Calu3 (cell line): ENCODE measurements at regions of chr5 and their contacts with region 1.

Region 1: DNA sequence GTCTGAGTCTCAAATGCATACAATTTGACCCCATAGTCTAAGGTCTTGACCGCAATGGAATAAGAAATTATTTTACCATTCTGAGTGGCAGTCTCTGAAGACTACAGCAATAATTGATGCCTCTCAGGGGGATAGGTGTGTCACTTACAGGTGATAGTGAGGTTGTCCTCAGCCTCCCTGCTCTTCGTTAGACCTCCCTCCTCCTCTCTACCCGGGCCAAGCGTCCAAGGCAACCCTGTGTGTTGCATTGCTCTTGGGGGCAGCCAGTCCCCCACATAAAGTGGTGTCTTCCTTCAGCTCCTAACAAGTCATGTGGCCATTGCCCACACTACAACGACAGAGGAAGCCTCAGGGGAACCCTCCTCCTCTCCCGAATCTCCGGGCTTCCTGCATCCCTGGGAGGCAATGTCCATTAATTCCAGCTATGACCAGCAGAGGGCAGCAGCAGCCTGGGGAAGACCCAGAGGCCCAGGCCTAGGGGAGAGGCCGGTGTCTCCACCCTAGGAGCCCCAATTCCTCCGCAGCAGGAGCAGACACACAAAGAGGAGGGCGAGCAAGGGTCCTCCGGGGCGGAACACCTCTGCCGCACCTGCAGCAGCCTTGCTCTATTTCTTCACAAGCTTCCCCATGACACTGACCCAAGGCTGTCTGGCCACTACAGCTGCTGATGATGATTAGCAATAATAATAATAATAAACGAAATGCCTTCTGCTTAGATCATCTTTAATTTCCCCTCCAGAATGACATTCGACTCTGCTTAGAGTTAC is 134.8 kb downstream of the KCNIP1 start:
- DNase-seq: peak; percentile 90
- H3K4me3 Mint-ChIP-seq: no peak overlapping the region
- H3K27ac Mint-ChIP-seq: no peak overlapping the region
- H3K4me1 Mint-ChIP-seq: peaks cover 19% of the 10 kb centered on the region
- H3K27me3 Mint-ChIP-seq: peaks cover 30% of the 10 kb centered on the region
- CTCF ChIP-seq: peak; percentile 97

Region 2: GRCh38 chr5:170451747-170452365 is 186.8 kb before region 1 on chr5:
- CTCF ChIA-PET with region 1: no interaction called
- intact Hi-C with region 1: no loop called
- DNase-seq: no peak
- H3K4me3 Mint-ChIP-seq: no peak overlapping the region
- H3K27ac Mint-ChIP-seq: no peak overlapping the region
- H3K4me1 Mint-ChIP-seq: no peaks in the 10 kb centered on the region
- H3K27me3 Mint-ChIP-seq: peaks cover 37% of the 10 kb centered on the region
- CTCF ChIP-seq: no peak

Region 3: DNA sequence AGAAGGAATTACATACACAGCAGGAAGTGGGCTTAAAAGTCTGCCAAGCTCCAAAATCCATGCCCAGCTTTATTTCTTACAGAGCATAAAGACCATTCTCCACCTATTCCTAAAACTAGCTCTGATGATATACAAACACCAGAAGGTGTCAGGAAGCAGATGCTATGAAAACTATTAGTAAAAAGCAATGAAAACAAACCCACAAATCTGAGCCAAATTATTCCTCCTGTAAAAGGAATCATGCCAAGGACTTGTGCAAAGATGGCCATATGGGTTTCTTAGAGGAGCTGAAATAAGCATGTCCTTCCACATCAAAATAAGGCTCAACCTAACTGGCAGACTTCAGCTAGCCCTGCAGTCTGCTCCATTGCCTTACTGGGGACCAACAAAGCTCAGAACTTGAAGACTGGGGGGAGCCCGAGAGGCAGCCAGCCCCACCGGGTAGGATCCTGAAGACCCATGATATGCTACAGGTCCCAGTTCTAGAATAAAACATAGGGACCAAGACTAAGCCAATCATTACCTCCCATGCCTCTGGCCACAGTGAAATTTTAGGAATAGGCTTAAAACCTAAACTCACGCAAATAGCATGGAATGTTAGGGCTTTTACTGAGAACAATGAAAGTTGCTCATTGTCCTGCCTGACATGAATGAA is 102.0 kb after region 1 on chr5:
- CTCF ChIA-PET with region 1: interaction called, 11 read pairs
- intact Hi-C with region 1: loop called (anchors 5 kb)
- DNase-seq: no peak
- H3K4me3 Mint-ChIP-seq: no peak overlapping the region
- H3K27ac Mint-ChIP-seq: no peak overlapping the region
- H3K4me1 Mint-ChIP-seq: peaks cover 18% of the 10 kb centered on the region
- H3K27me3 Mint-ChIP-seq: peaks cover 13% of the 10 kb centered on the region
- CTCF ChIP-seq: no peak

Region 4: DNA sequence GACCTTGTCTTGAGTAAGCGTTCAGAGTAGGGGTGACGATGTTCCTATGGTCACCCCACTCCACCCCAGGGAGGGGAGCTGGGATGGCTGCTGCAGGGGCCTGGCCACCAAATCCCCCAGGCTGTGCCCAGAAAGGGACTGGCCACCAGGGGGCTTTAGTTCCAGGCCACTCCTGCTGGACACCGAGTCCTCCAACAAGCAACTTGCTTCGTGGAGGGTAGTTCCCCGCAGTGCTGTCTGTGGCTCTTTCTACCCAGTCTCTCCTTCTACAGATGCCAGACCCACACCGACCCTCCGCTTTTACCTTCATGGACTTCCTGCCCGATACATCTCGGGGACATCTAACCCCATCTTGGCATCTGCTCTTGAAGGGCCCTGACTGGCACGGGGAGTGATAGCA is 109.2 kb after region 1 on chr5:
- CTCF ChIA-PET with region 1: interaction called, 11 read pairs
- intact Hi-C with region 1: loop called (anchors 5 kb)
- DNase-seq: peak; percentile 80
- H3K4me3 Mint-ChIP-seq: no peak overlapping the region
- H3K27ac Mint-ChIP-seq: peak overlapping the region; percentile 99
- H3K4me1 Mint-ChIP-seq: peaks cover 84% of the 10 kb centered on the region
- H3K27me3 Mint-ChIP-seq: no peaks in the 10 kb centered on the region
- CTCF ChIP-seq: peak; percentile 77

Region 5: DNA sequence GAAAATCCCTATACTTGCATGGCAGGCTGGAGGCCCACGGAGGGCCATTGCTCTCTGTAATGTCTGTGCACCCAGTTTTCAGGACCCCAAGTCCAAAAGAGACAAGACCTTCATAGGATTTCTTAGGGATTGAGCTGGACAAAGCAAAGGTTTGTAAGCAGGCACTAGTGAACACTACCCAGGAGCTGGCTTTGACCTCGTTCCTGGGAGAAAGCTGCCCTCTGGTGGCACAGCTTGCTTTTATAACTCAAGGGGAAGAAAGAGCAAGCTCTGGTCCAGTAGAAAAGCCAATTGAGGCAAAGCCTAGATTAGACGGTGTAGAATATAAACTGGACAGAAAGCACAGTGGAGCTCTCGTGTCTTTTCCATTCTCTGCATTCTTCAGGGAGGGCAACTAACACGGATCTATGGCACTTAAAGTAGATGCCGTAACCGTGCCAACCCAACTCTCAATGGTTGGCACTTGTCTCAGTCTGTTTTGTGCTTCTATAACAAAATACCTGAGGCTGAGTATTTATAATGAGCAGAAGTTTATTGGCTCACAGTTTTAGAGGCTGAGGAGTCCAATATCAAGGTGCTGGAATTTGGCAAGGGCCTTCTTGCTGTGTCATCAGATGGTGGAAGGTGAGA is 152.8 kb after region 1 on chr5:
- CTCF ChIA-PET with region 1: interaction called, 15 read pairs
- intact Hi-C with region 1: loop called (anchors 1 kb)
- DNase-seq: peak; percentile 84
- H3K4me3 Mint-ChIP-seq: peak overlapping the region; percentile 10
- H3K27ac Mint-ChIP-seq: peak overlapping the region; percentile 84
- H3K4me1 Mint-ChIP-seq: peaks cover 60% of the 10 kb centered on the region
- H3K27me3 Mint-ChIP-seq: no peaks in the 10 kb centered on the region
- CTCF ChIP-seq: peak; percentile 83

Region 6: GRCh38 chr5:170917113-170917512 is 278.5 kb after region 1 on chr5:
- CTCF ChIA-PET with region 1: interaction called, 4 read pairs
- intact Hi-C with region 1: loop called (anchors 5 kb)
- DNase-seq: no peak
- H3K4me3 Mint-ChIP-seq: no peak overlapping the region
- H3K27ac Mint-ChIP-seq: peak overlapping the region; percentile 18
- H3K4me1 Mint-ChIP-seq: no peaks in the 10 kb centered on the region
- H3K27me3 Mint-ChIP-seq: no peaks in the 10 kb centered on the region
- CTCF ChIP-seq: no peak

Region 7: GRCh38 chr5:171207256-171207847 is 568.7 kb after region 1 on chr5:
- CTCF ChIA-PET with region 1: no interaction called
- intact Hi-C with region 1: loop called (anchors 10 kb)
- DNase-seq: peak; percentile 47
- H3K4me3 Mint-ChIP-seq: no peak overlapping the region
- H3K27ac Mint-ChIP-seq: no peak overlapping the region
- H3K4me1 Mint-ChIP-seq: no peaks in the 10 kb centered on the region
- H3K27me3 Mint-ChIP-seq: no peaks in the 10 kb centered on the region
- CTCF ChIP-seq: peak; percentile 61